ENCODE measurements at regions of chr18 and their contacts with region 1.

Region 1: GRCh38 chr18:2223849-2224248 is 347.5 kb downstream of the METTL4 start:
- DNase-seq: peak; percentile 7
- ATAC-seq: no peak
- H3K4me3 ChIP-seq: peak overlapping the region in 1 of 2 experiments; percentile 16; a peak in 1 of 4 replicates
- H3K27ac ChIP-seq: no peak overlapping the region
- H3K4me1 ChIP-seq: no peaks in the 10 kb centered on the region
- H3K27me3 ChIP-seq: no peaks in the 10 kb centered on the region
- CTCF ChIP-seq: peak; percentile 48; the same call in 1 of the 2 replicates

Region 2: GRCh38 chr18:864872-865273 is 1359.0 kb before region 1 on chr18:
- CTCF ChIA-PET with region 1: no interaction called
- POLR2A ChIA-PET with region 1: no interaction called
- in situ Hi-C with region 1: no loop called
- intact Hi-C with region 1: loop called (anchors 10 kb)
- DNase-seq: peak; percentile 60
- ATAC-seq: peak; percentile 97
- H3K4me3 ChIP-seq: no peak overlapping the region
- H3K27ac ChIP-seq: no peak overlapping the region
- H3K4me1 ChIP-seq: no peaks in the 10 kb centered on the region
- H3K27me3 ChIP-seq: peaks cover 6% of the 10 kb centered on the region
- CTCF ChIP-seq: peak; percentile 100

Region 3: GRCh38 chr18:911025-911424 is 1312.8 kb before region 1 on chr18:
- CTCF ChIA-PET with region 1: interaction called, 10 read pairs
- POLR2A ChIA-PET with region 1: no interaction called
- in situ Hi-C with region 1: no loop called
- intact Hi-C with region 1: no loop called
- DNase-seq: no peak
- ATAC-seq: no peak
- H3K4me3 ChIP-seq: no peak overlapping the region
- H3K27ac ChIP-seq: no peak overlapping the region
- H3K4me1 ChIP-seq: no peaks in the 10 kb centered on the region
- H3K27me3 ChIP-seq: peaks cover 5% of the 10 kb centered on the region
- CTCF ChIP-seq: no peak

Region 4: DNA sequence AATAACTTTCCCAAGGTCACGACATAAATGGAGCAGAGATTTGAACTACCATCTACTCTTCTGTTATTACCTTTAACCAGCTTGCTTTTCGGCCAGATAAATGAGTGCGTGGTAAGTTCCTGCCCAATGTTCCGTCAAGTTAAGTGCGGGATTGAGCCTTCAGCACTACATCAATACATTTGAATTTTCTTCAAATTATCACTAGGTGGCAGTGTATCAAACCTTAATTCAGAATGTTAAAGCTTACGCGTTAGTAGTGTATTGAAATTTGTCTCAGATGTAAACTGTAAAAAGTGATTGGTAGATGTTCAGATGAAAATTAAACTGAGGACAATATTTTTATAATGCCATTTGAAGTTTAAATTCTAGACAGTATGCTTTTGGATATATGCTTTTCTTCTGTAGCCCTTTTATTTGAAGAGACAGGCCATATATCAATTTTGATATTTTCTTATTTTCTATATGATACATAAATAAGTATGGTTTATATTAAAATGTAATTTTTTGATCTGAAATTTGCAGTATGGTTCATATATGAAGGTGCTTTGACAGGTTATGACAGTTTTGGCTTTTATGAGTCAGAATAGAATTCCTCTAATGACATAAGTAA is 637.9 kb before region 1 on chr18:
- CTCF ChIA-PET with region 1: no interaction called
- POLR2A ChIA-PET with region 1: no interaction called
- in situ Hi-C with region 1: no loop called
- intact Hi-C with region 1: loop called (anchors 5 kb)
- DNase-seq: no peak
- ATAC-seq: peak; percentile 58; the same call in 1 of the 2 replicates
- H3K4me3 ChIP-seq: no peak overlapping the region
- H3K27ac ChIP-seq: no peak overlapping the region
- H3K4me1 ChIP-seq: no peaks in the 10 kb centered on the region
- H3K27me3 ChIP-seq: no peaks in the 10 kb centered on the region
- CTCF ChIP-seq: peak; percentile 52; the same call in 1 of the 2 replicates

Region 5: GRCh38 chr18:2104620-2105462 is 119.0 kb before region 1 on chr18:
- CTCF ChIA-PET with region 1: no interaction called
- POLR2A ChIA-PET with region 1: no interaction called
- in situ Hi-C with region 1: no loop called
- intact Hi-C with region 1: loop called (anchors 5 kb)
- DNase-seq: peak; percentile 27
- ATAC-seq: peak; percentile 70; the same call in 1 of the 2 replicates
- H3K4me3 ChIP-seq: no peak overlapping the region
- H3K27ac ChIP-seq: no peak overlapping the region
- H3K4me1 ChIP-seq: no peaks in the 10 kb centered on the region
- H3K27me3 ChIP-seq: no peaks in the 10 kb centered on the region
- CTCF ChIP-seq: peak; percentile 70

Region 6: DNA sequence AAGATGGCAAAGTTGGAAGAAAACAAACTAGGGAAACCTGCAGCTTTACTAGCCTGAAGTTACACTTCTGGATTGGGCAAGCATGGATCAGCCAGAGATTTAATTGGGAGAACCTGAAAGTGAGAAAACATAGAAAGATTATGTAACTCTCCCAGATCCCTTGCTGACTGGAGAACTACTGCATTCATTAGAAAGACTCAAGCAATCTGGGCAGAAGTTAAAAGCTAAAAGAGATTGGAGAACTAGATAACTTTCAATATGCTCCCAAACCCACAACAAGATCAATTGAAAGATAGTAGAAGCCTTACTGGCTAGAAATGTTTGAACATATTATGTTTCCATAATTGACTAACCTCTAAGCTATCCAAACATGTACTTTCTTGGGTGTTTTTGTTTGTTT is 161.6 kb after region 1 on chr18:
- CTCF ChIA-PET with region 1: no interaction called
- POLR2A ChIA-PET with region 1: no interaction called
- in situ Hi-C with region 1: no loop called
- intact Hi-C with region 1: no loop called
- DNase-seq: no peak
- ATAC-seq: no peak
- H3K4me3 ChIP-seq: no peak overlapping the region
- H3K27ac ChIP-seq: no peak overlapping the region
- H3K4me1 ChIP-seq: no peaks in the 10 kb centered on the region
- H3K27me3 ChIP-seq: no peaks in the 10 kb centered on the region
- CTCF ChIP-seq: no peak

Measured in Panc1 (cell line).